Activated CD8-positive, alpha-beta memory T cell treated with anti-CD3 and anti-CD28 coated beads, Interleukin-2, amount 10 ng/mL, durations not matched to agents 7 days and 5 days (primary cell): ENCODE measurements at regions of chr12 and their contacts with region 1.

Region 1: GRCh38 chr12:39319187-39319586 is 123.7 kb downstream of the KIF21A start:
- DNase-seq: no peak
- ATAC-seq: no peak
- H3K4me3 Mint-ChIP-seq: no peak overlapping the region
- H3K27ac Mint-ChIP-seq: no peak overlapping the region
- H3K4me1 Mint-ChIP-seq: peaks cover 3% of the 10 kb centered on the region
- H3K27me3 Mint-ChIP-seq: no peaks in the 10 kb centered on the region

Region 2: DNA sequence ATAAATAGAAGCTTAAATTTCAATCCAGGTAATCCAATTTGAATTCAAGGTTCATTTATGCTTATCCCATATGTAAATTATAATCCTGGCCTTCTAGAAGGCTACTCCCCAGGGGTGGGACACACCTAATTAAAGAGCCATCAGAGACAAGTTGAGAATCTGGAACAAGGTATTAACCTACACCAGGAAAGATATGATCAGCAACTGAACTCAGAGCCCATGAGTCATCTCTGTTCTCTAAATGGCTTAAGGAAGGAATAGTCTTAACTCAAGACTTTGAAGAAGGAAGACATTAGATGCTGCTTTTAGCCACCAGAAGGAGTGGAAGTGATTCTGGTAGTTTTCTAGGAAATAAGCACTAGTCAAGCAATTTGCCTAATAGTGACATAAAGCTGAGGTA is 35.8 kb after region 1 on chr12:
- CTCF ChIA-PET with region 1: no interaction called
- DNase-seq: no peak
- ATAC-seq: no peak
- H3K4me3 Mint-ChIP-seq: no peak overlapping the region
- H3K27ac Mint-ChIP-seq: no peak overlapping the region
- H3K4me1 Mint-ChIP-seq: peaks cover 6% of the 10 kb centered on the region
- H3K27me3 Mint-ChIP-seq: no peaks in the 10 kb centered on the region

Region 3: DNA sequence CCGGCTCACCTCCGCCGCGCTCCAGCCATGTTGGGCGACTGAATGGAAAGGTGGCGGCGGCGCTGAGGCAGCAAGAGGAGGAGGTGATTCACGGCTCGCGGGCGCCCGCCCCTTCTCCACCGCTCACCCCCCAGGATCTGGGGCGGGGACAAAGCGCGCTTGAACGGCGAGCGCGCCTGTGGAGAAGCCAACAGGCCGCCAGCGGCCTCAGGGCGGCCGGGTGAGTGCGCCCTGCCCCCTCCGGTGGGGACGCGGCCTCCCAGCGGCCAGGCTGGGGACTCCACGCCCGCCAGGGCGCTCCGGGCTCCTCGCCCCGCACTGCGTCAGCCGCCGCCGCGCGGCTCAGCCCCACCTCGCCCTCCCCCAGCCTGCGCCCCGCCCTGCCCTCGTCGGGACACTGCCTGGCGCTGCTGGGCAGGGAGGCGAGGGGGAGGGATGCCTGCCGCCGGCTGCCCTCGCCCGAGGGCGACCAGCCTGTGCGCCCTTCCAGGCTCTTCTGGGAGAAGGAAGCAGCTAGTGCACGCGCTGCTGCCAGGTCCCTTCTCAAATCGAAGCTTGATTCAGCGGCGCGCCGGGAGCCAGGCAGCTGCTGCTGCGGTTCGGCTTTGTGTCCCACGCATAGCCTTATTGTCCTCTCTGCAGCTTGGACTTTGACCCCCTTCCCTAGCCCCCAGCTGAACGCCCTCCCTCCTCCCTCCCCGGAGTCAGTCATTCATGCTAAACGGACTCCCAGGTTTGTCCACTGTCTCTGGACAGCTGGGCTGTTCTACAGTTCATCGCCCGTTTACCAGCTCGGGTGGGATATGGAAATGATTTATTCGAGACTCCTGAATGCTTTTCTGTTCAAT is 124.1 kb after region 1 on chr12 and contains the start of gene KIF21A:
- CTCF ChIA-PET with region 1: interaction called, 17 read pairs
- DNase-seq: peak; percentile 93
- ATAC-seq: peak; percentile 94
- H3K4me3 Mint-ChIP-seq: peak within 1 kb of the TSS; percentile 83
- H3K27ac Mint-ChIP-seq: peak within 1 kb of the TSS; percentile 93
- H3K4me1 Mint-ChIP-seq: peaks cover 28% of the 10 kb centered on the region
- H3K27me3 Mint-ChIP-seq: no peaks in the 10 kb centered on the region
- total RNA-seq, gene KIF21A: 22.8 to 33.6 TPM